Sigmoid colon (tissue), 7 donors: ENCODE measurements at regions of chr13 and their contacts with region 1.

Region 1: GRCh38 chr13:41222259-41222852 is 28.0 kb upstream of the KBTBD7 start:
- DNase-seq: no peak
- H3K4me3 ChIP-seq: no peak overlapping the region
- H3K27ac ChIP-seq: no peak overlapping the region
- H3K4me1 ChIP-seq: no peaks in the 10 kb centered on the region
- H3K27me3 ChIP-seq: no peaks in the 10 kb centered on the region
- CTCF ChIP-seq: peak; percentile 46 to 84 (median 72)
- EP300 ChIP-seq: no peak
- POLR2A ChIP-seq: no peak

Region 2: GRCh38 chr13:41054212-41054877 is 168.0 kb before region 1 on chr13:
- intact Hi-C with region 1: loop called (anchors 5 kb)
- DNase-seq: no peak
- H3K4me3 ChIP-seq: peak overlapping the region in 1 of 4 donors; percentile 6
- H3K27ac ChIP-seq: peak overlapping the region; percentile 7 to 99 (median 83)
- H3K4me1 ChIP-seq: peaks cover 0 to 94% (median 84%) of the 10 kb centered on the region in 4 donors
- H3K27me3 ChIP-seq: no peaks in the 10 kb centered on the region
- CTCF ChIP-seq: peak; percentile 7 to 65 (median 50)
- EP300 ChIP-seq: no peak
- POLR2A ChIP-seq: no peak

Region 3: DNA sequence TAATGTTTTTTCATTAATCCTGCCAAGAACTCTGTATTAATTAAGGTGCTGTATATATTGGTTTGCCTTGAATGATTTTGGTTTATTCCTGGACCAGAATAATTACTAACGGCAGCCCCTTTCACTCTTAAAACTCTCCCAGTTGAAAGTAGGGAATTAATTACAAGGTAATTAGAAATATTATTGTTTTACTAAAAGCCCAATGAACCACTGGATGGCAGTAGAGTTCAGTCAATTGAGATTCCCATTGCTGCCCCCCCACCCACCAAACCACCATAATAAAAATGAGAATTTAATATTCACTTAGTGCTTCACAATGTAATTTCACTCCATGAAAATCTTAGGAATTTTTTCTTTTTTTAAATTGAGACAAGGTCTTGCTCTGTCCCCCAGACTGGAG is 147.3 kb before region 1 on chr13:
- intact Hi-C with region 1: loop called (anchors 2 kb)
- DNase-seq: no peak
- H3K4me3 ChIP-seq: no peak overlapping the region
- H3K27ac ChIP-seq: no peak overlapping the region
- H3K4me1 ChIP-seq: no peaks in the 10 kb centered on the region
- H3K27me3 ChIP-seq: no peaks in the 10 kb centered on the region
- CTCF ChIP-seq: peak in 3 of 4 experiments; percentile 33 to 58 (median 44)
- EP300 ChIP-seq: no peak
- POLR2A ChIP-seq: no peak

Region 4: DNA sequence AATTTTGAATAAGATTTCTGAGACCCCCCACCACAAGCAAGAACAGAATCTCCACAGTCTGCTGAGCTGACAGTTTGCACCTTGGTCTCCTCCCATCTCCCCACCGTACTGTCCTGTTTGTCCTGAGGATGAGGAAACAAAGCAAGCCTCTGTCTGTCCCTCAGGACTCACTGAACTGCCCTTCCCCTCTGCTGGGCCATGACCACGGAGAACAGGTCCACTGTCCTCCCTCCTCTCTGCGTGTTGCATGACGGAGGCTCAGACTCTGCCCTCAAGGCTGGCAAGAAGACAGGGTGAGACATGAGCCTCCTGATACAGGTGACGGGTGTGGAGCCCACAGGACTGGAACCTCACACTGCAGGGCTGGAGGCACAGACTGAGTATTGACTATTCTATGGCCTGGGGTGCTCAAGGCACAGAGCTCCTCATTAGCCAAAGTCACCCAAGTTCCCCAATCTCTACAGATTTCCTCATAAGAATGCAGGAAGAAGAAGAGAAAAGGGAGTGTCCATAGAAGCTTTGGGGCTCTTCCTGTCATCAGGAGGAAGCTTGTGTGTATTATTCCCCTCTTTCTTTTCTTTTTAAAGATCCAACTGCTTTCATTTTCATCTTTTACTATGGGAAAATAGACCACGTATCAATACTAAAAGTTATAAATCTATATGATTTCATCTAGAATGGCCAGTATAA is 212.6 kb after region 1 on chr13:
- intact Hi-C with region 1: no loop called
- DNase-seq: no peak
- H3K4me3 ChIP-seq: no peak overlapping the region
- H3K27ac ChIP-seq: no peak overlapping the region
- H3K4me1 ChIP-seq: no peaks in the 10 kb centered on the region
- H3K27me3 ChIP-seq: no peaks in the 10 kb centered on the region
- CTCF ChIP-seq: no peak
- EP300 ChIP-seq: no peak
- POLR2A ChIP-seq: no peak

Region 5: GRCh38 chr13:41456768-41457588 is 234.6 kb after region 1 on chr13 and contains the start of gene RGCC:
- intact Hi-C with region 1: no loop called
- DNase-seq: peak; percentile 82
- H3K4me3 ChIP-seq: peak within 1 kb of the TSS; percentile 52 to 72 (median 62)
- H3K27ac ChIP-seq: peak within 1 kb of the TSS; percentile 41 to 73 (median 58)
- H3K4me1 ChIP-seq: peaks cover 0 to 24% (median 22%) of the 10 kb centered on the region in 4 donors
- H3K27me3 ChIP-seq: peaks cover 9 to 57% (median 19%) of the 10 kb centered on the region in 3 donors
- CTCF ChIP-seq: no peak
- EP300 ChIP-seq: no peak
- POLR2A ChIP-seq: no peak
- total RNA-seq, gene RGCC: 30.4 to 65.3 (median 43.3) TPM